Left cardiac atrium (tissue), 4 donors: ENCODE measurements at regions of chr16 and their contacts with region 1.

Region 1: GRCh38 chr16:20383106-20384029 is 21.2 kb downstream of the PDILT start:
- DNase-seq: peak; percentile 38
- ATAC-seq: peak in 1 of 2 donors; percentile 78

Region 2: DNA sequence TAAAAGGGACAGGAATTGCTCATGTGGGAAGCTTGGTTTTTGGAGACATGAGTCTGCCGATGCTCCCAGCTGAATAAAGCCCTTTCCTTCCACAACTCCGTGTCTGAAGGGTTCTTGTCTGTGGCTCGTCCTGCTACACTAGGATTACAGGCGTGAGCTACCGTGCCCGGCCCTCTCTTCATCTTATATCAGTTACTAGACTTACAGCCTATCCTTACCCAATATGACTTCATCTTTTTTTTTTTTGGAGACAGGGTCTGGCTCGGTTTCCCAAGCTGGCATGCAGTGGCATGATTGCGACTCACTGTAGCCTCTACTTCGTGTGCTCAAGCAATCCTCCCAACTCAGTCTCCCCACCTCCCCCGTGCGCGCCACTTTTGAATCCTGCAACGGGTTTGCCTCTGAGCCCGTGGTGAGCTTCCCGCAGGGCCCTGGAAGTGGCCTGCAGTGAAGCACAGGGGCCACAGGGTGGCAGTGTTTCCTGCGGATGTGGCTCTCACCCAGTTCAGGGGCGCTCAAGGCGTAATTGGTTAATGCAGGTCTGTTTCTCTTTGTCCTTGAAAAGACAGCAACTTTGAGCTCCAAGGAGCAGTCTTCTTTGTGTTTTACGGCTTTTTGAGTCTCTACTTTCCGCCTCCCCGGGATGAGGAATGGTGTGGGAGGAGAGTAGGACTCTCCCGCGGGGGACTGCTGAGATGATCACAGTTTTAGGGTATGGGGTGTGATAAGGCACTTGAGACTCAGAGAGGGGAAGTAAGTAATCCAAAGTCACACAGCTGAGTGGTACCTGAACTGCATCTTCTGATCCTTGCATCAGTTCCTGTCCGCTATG is 476.0 kb before region 1 on chr16:
- intact Hi-C with region 1: loop called (anchors 2 to 10 kb)
- DNase-seq: peak; percentile 63
- ATAC-seq: peak; percentile 91 to 93

Region 3: DNA sequence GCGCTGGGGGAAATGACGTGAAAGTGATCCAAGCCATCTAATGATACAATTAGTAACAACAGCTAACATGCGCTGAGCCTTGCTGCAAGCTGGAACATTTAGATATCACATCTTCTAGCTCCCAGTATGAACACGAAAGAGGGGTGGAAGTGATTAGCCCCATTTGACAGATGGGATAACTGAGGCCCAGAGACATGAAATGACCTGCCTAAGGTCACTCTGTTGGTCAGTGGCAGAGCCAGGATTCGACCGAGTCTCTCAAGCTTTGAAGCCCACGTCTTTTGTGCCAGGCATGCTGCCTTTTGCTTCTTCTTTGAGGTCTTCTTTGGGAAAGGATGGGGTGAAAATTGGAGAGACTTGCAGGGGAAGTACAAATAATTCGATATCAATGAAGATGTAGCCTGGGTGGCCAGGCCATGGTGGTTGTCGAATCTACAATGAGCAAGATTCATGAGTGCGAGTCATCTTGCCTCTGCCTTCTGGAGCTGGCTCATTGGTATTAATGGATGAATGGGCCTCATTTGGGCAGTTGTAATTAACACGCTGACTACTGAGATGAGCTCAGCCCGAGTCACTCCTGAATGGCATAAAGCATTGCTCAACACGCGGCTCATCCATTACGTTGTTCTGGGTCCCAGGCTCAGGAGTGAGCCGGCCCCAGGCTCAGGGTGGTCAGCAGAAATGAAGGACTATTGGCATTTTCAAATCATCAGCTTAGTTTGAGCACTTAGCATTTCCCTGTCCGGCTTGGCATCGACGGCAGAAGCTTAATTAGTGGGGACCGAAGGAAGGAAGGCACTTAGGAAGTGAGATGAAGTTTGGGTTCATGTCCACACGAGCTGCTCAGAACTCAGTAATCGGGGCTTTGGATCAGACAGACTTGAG is 470.7 kb before region 1 on chr16:
- intact Hi-C with region 1: loop called (anchors 2 to 10 kb)
- DNase-seq: no peak
- ATAC-seq: no peak